ENCODE measurements at regions of chr1 and their contacts with region 1.

Region 1: GRCh38 chr1:26999440-26999987 is 6.0 kb downstream of the TRNP1 start:
- DNase-seq: no peak
- ATAC-seq: no peak
- H3K4me3 ChIP-seq: no peak overlapping the region
- H3K27ac ChIP-seq: no peak overlapping the region
- H3K4me1 ChIP-seq: peaks cover 3% of the 10 kb centered on the region
- H3K27me3 ChIP-seq: peaks cover under 1 to 8% of the 10 kb centered on the region in 2 experiments
- CTCF ChIP-seq: no peak
- EP300 ChIP-seq: no peak
- POLR2A ChIP-seq: no peak
- RAD21 ChIP-seq: no peak

Region 2: GRCh38 chr1:26965640-26966039 is 33.9 kb before region 1 on chr1:
- CTCF ChIA-PET with region 1: interaction called, 22 read pairs
- POLR2A ChIA-PET with region 1: no interaction called
- RAD21 ChIA-PET with region 1: no interaction called
- SMC1A ChIA-PET with region 1: no interaction called
- in situ Hi-C with region 1: no loop called
- intact Hi-C with region 1: no loop called
- DNase-seq: no peak
- ATAC-seq: no peak
- H3K4me3 ChIP-seq: no peak overlapping the region
- H3K27ac ChIP-seq: no peak overlapping the region
- H3K4me1 ChIP-seq: no peaks in the 10 kb centered on the region
- H3K27me3 ChIP-seq: no peaks in the 10 kb centered on the region; a peak in 2 of 4 replicates
- CTCF ChIP-seq: no peak
- EP300 ChIP-seq: no peak
- POLR2A ChIP-seq: no peak
- RAD21 ChIP-seq: no peak

Region 3: DNA sequence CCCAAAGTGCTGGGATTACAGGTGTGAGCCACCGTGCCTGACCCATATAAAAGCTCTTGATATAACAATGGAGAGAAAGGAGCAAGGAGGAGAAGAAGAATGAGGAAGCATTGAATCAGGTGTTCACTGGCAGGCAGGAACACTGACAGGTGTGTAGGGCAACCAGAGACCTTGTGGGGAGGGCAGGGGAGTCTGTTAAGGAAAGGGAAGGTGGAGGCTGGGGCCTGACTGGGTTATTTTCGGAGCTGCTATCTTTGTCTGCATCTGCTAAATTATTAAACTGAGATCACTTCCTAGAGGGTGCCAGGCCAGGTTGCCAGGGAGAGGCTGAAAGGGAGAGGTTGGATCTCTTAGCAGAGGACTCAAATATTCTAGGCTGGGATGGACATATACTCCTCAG is 12.9 kb before region 1 on chr1:
- CTCF ChIA-PET with region 1: interaction called, 15 read pairs
- POLR2A ChIA-PET with region 1: no interaction called
- RAD21 ChIA-PET with region 1: interaction called, 5 read pairs
- SMC1A ChIA-PET with region 1: interaction called, 6 read pairs
- in situ Hi-C with region 1: no loop called
- intact Hi-C with region 1: no loop called
- DNase-seq: no peak
- ATAC-seq: no peak
- H3K4me3 ChIP-seq: no peak overlapping the region
- H3K27ac ChIP-seq: no peak overlapping the region
- H3K4me1 ChIP-seq: no peaks in the 10 kb centered on the region
- H3K27me3 ChIP-seq: peaks cover 0 to 2% of the 10 kb centered on the region in 2 experiments; a peak in 1 of 4 replicates
- CTCF ChIP-seq: no peak
- EP300 ChIP-seq: no peak
- POLR2A ChIP-seq: no peak
- RAD21 ChIP-seq: no peak

Region 4: GRCh38 chr1:27038020-27038419 is 38.5 kb after region 1 on chr1:
- CTCF ChIA-PET with region 1: interaction called, 72 read pairs
- POLR2A ChIA-PET with region 1: no interaction called
- RAD21 ChIA-PET with region 1: interaction called, 57 read pairs
- SMC1A ChIA-PET with region 1: interaction called, 43 read pairs
- in situ Hi-C with region 1: no loop called
- intact Hi-C with region 1: loop called (anchors 5 kb)
- DNase-seq: no peak
- ATAC-seq: no peak
- H3K4me3 ChIP-seq: no peak overlapping the region
- H3K27ac ChIP-seq: no peak overlapping the region
- H3K4me1 ChIP-seq: no peaks in the 10 kb centered on the region
- H3K27me3 ChIP-seq: peaks cover 0 to 2% of the 10 kb centered on the region in 2 experiments; a peak in 3 of 4 replicates
- CTCF ChIP-seq: no peak
- EP300 ChIP-seq: no peak
- POLR2A ChIP-seq: no peak
- RAD21 ChIP-seq: no peak

Region 5: GRCh38 chr1:27097484-27097917 is 98.0 kb after region 1 on chr1:
- CTCF ChIA-PET with region 1: interaction called, 99 read pairs
- POLR2A ChIA-PET with region 1: no interaction called
- RAD21 ChIA-PET with region 1: interaction called, 30 read pairs
- SMC1A ChIA-PET with region 1: interaction called, 35 read pairs
- in situ Hi-C with region 1: no loop called
- intact Hi-C with region 1: loop called (anchors 1 kb)
- DNase-seq: no peak
- ATAC-seq: peak; percentile 78
- H3K4me3 ChIP-seq: no peak overlapping the region
- H3K27ac ChIP-seq: no peak overlapping the region
- H3K4me1 ChIP-seq: peaks cover 14% of the 10 kb centered on the region
- H3K27me3 ChIP-seq: no peaks in the 10 kb centered on the region
- CTCF ChIP-seq: peak; percentile 94 to 97 (median 94)
- EP300 ChIP-seq: no peak
- POLR2A ChIP-seq: no peak
- RAD21 ChIP-seq: peak; percentile 81